ENCODE measurements at regions of chr17 and their contacts with region 1.

Region 1: GRCh38 chr17:73311781-73312641 is at the start of gene CDC42EP4:
- DNase-seq: peak; percentile 98
- H3K4me3 ChIP-seq: peak within 1 kb of the TSS; percentile 86 to 99
- H3K27ac ChIP-seq: peak within 1 kb of the TSS; percentile 93 to 96
- H3K4me1 ChIP-seq: peaks cover 30 to 35% of the 10 kb centered on the region in 2 experiments; a peak in 3 of 4 replicates
- H3K27me3 ChIP-seq: no peaks in the 10 kb centered on the region
- CTCF ChIP-seq: no peak; the same call in 1 of the 2 replicates
- EP300 ChIP-seq: 0 out of 4 replicates have a peak, but pooled peaks of 1 of the 2 experiments have one; percentile 21
- RAD21 ChIP-seq: no peak; the same call in 1 of the 2 replicates
- polyA plus RNA-seq, gene CDC42EP4: 23.7 and 28.3 TPM in 2 replicates

Region 2: DNA sequence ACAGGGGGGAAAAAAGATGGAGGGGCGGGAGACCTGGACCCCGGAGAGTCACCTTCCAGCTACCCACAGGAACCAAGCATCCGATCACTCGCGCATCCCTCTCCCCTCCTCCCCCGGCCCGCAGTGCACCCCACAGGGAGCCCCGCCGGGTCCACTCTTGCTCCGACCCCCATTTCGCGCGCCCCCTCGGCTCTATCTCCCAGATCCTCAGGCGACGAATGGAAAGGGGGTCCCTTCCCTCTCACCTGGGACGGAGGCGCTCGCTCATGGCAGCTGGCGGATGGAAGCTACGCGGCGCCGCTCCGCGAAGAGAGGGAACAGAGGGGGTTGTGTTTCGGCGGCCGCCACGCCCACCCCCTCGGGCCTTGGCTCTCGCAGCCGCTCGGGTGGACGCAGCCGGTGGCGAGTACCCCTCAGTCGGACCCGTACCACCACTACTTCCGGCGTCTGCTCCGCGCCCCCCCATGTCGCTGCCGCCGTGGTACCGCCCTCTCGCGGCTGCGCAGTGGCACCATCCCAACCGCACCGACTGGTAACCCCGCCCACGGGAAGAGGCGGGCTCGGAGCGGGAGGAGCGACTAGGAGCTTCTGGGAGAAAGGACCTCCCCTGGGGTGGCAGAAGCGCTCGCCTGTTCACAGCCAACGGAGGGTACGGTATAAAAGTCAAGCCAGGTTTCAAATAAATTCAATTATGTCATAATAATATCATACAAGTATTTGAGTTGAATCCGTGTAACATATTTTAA is 80.0 kb before region 1 on chr17:
- CTCF ChIA-PET with region 1: interaction called, 14 read pairs
- POLR2A ChIA-PET with region 1: interaction called, 5 read pairs
- DNase-seq: peak; percentile 100
- H3K4me3 ChIP-seq: peak overlapping the region; percentile 97 to 98
- H3K27ac ChIP-seq: peak overlapping the region; percentile 59 to 87
- H3K4me1 ChIP-seq: peaks cover 24 to 29% of the 10 kb centered on the region in 2 experiments
- H3K27me3 ChIP-seq: no peaks in the 10 kb centered on the region
- CTCF ChIP-seq: peak; percentile 10; the same call in 1 of the 2 replicates
- EP300 ChIP-seq: peak in 1 of 2 experiments; percentile 47; a peak in 2 of 4 replicates
- RAD21 ChIP-seq: 0 out of 2 replicates have a peak, but pooled peaks have one; percentile 24

Region 3: DNA sequence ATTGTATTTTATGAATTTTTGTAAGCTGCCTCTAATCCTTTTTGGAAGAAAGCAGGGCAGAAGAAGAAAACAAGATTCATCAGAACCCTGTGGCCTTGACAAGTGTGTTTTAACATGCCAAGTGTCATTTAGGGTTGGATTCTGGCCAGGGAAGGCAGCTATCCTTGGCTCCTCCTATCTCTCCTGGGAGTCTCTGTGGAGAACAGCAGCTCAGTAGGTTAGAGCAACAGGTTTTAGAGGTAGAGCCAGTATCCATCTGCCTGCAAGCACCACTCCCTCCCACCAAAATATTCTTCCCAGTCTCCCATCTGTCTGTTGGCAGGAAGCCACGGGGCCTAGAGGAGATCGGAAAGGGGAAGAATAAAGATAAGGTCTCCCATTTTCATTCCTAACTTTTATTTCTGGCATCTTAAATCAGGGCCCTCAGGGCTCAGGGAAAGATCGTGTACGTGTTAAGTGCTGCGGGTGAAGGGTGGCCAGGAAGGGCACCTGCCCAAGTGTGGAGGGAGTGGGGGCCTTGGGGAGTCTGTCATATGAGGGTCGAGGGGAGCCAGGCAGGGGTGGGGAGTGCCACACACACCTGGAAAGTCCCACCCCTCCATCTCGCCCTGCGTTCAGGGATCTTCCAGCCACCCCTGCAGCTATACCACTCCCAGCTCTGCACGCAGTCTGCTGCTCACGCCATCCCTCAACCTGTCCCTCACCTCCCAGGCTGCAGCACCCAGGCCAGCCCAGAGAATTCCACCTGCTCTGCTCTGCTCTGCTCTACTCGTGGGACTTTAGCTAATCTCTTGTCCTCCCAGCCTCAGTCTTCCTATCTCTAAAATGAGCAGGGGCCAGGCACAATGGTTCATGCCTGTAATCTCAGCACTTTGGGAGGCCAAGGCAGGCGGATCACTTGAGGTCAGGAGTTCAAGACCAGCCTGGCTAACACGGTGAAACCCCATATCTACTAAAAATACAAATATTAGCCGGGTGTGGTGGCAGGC is 33.3 kb before region 1 on chr17:
- CTCF ChIA-PET with region 1: interaction called, 16 read pairs
- POLR2A ChIA-PET with region 1: interaction called, 3 read pairs
- DNase-seq: peak; percentile 76
- H3K4me3 ChIP-seq: no peak overlapping the region
- H3K27ac ChIP-seq: no peak overlapping the region; a peak in 1 of 4 replicates
- H3K4me1 ChIP-seq: peaks cover 9 to 26% of the 10 kb centered on the region in 2 experiments
- H3K27me3 ChIP-seq: no peaks in the 10 kb centered on the region
- CTCF ChIP-seq: no peak
- EP300 ChIP-seq: peak in 1 of 2 experiments; percentile 25; a peak in 1 of 4 replicates
- RAD21 ChIP-seq: no peak

Region 4: DNA sequence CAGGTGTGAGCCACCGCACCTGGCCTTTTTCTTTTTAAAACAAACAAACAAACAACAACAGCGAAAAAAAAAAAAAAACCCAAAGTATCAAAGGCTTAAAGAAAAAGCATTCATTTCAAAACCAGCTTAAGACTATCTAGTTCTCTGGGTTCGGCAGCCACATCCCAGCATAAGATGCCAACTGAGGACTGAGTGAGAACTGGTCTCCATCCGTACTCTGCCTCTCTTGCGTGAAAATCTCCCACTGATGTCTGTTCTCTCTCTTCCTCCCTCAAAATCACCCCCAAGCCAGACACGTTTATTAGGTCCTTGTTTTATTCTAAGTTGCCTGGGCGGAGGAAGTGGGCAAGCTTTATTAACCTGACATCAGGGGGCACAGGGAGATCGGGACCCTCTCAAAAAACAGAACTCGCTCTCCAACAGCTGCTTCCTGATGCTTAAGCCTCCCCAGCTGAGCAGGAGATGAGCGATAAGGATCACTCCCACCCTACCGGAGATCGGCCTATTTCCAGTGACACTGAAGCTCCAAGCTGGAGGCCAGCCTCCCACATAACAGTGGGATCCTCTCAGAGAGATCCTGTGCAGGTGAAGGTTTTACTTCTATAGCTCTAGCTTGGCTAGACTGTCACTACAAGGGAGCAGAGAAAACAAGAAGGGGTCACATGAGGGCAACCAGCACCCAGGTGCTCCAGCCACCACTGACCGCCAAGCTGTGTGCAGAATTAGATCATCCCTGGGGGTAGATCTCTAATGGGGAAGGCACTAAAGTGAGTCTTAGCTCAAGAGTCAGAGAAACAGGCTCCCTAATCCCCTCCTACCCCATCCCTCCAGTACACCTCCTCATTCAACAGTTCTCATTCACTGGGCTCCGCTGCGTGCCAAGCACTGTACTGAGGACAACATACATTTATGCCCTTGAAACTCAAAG is 13.8 kb before region 1 on chr17:
- CTCF ChIA-PET with region 1: interaction called, 37 read pairs
- POLR2A ChIA-PET with region 1: interaction called, 9 read pairs
- DNase-seq: peak; percentile 73
- H3K4me3 ChIP-seq: no peak overlapping the region
- H3K27ac ChIP-seq: peak overlapping the region; percentile 11 to 51; a peak in 3 of 4 replicates
- H3K4me1 ChIP-seq: peaks cover 42 to 46% of the 10 kb centered on the region in 2 experiments
- H3K27me3 ChIP-seq: no peaks in the 10 kb centered on the region
- CTCF ChIP-seq: no peak
- EP300 ChIP-seq: peak in 1 of 2 experiments; percentile 36; a peak in 1 of 4 replicates
- RAD21 ChIP-seq: 0 out of 2 replicates have a peak, but pooled peaks have one; percentile 3

Region 5: GRCh38 chr17:73347351-73347750 is 35.3 kb after region 1 on chr17:
- CTCF ChIA-PET with region 1: interaction called, 47 read pairs
- POLR2A ChIA-PET with region 1: interaction called, 26 read pairs
- DNase-seq: no peak
- H3K4me3 ChIP-seq: no peak overlapping the region
- H3K27ac ChIP-seq: no peak overlapping the region
- H3K4me1 ChIP-seq: peaks cover 16 to 42% of the 10 kb centered on the region in 2 experiments
- H3K27me3 ChIP-seq: no peaks in the 10 kb centered on the region
- CTCF ChIP-seq: no peak
- EP300 ChIP-seq: no peak
- RAD21 ChIP-seq: no peak

Measured in SK-N-SH (cell line).